ENCODE measurements at regions of chr3 and their contacts with region 1.

Region 1: GRCh38 chr3:32947789-32948238 is 3.6 kb upstream of the CCR4 start:
- DNase-seq: peak; percentile 61 to 88 (median 75)
- ATAC-seq: peak; percentile 71 to 90 (median 88)
- H3K4me3 ChIP-seq: no peak overlapping the region
- H3K27ac ChIP-seq: no peak overlapping the region
- H3K4me1 ChIP-seq: peaks cover 0 to 3% (median 0%) of the 10 kb centered on the region in 12 donors
- H3K27me3 ChIP-seq: no peaks in the 10 kb centered on the region
- CTCF ChIP-seq: peak; percentile 54 to 78 (median 66)
- POLR2A ChIP-seq: no peak

Region 2: GRCh38 chr3:32882603-32883025 is 65.2 kb before region 1 on chr3:
- intact Hi-C with region 1: no loop called
- DNase-seq: no peak
- ATAC-seq: no peak
- H3K4me3 ChIP-seq: no peak overlapping the region
- H3K27ac ChIP-seq: no peak overlapping the region
- H3K4me1 ChIP-seq: no peaks in the 10 kb centered on the region
- H3K27me3 ChIP-seq: no peaks in the 10 kb centered on the region
- CTCF ChIP-seq: no peak
- POLR2A ChIP-seq: no peak

Region 3: DNA sequence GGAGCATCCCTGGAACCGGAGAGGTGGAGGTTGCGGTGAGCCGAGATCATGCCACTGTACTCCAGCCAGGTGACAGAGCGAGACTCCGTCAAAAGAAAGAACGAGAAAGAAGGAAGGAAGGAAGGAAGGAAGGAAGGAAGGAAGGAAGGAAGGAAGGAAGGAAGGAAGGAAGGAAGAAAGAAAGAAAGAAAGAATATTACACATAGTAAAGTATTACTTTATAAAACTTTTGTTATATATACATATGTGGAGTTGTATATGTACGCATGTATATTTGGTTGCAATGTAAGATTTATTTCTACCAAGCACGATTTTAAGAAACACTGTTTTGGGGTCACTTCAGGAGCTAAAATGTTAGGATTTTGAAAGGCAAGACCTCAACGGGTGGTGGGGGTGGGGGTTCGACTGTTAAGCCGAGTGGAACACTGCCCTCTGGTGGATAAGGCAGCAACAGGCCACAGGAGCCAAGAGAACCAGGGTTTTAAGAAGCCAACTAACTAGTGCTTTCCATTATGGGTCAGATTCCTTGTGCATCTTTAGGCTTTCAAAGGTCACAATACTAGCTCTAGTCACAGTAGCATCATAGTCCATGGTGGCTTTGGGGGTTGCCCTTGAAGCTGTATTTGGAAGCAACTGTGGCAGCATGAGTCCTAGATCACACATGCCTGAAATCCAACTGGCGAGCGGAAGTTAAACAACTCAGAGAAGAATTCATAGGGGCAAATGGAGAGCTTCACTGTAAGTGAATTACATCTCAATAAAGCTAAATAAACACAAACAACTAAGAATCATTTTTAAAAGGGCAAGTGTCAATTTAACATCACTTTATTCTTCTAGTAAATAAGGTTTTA is 126.6 kb after region 1 on chr3:
- intact Hi-C with region 1: loop called in 9 of 10 experiments (anchors 1 to 10 kb)
- DNase-seq: peak in 4 of 5 donors; percentile 37 to 51 (median 44)
- ATAC-seq: peak in 3 of 4 donors; percentile 62 to 75 (median 68)
- H3K4me3 ChIP-seq: no peak overlapping the region
- H3K27ac ChIP-seq: no peak overlapping the region
- H3K4me1 ChIP-seq: peaks cover 0 to 16% (median 0%) of the 10 kb centered on the region in 12 donors
- H3K27me3 ChIP-seq: no peaks in the 10 kb centered on the region
- CTCF ChIP-seq: peak; percentile 63 to 86 (median 76)
- POLR2A ChIP-seq: no peak

Region 4: GRCh38 chr3:33360136-33360825 is 412.5 kb after region 1 on chr3:
- intact Hi-C with region 1: loop called in 1 of 10 experiments (anchors 5 kb)
- DNase-seq: no peak
- ATAC-seq: no peak
- H3K4me3 ChIP-seq: no peak overlapping the region
- H3K27ac ChIP-seq: no peak overlapping the region
- H3K4me1 ChIP-seq: peaks cover 0 to 11% (median 1%) of the 10 kb centered on the region in 12 donors
- H3K27me3 ChIP-seq: no peaks in the 10 kb centered on the region
- CTCF ChIP-seq: no peak
- POLR2A ChIP-seq: no peak

Region 5: DNA sequence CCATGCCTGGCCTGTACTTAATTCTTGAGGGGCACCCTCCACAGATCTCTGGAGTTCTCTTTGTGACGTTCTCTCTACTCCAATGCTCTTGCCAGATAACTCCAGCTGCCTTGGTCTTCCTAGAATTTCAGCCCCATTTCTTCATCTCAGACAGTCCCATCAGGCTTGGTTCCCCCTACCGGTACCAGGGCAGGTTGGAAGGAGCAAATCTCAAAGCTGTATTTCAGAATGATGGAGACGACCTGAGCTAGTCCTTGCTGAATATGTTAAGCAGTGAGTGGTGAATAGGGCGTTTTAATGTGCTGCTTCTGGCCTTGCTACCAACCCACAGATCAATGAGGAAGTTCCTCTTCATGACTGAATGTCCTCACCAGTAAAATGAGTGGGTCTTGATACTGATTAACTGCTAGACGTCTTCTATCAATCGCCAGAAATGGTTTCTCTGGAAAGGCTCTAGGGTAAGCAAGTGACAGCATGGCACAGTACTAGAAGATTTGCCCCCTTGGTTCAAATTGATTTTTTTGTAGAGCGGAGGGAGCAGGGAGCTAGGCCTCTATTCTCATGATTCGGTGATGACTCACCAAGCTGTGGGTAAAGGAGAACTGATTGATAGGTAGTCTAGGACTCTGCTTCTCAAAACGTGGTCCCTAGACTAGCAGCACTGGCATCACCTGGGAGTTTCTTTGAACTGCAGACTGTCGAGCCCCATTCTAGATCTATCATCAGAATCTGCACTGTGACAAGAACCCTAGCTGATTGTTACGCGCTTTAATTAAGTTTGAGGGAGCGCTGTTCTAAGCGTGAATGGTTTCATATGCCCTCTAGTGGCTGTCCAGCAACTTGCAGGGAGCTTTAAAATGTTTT is 424.6 kb after region 1 on chr3:
- intact Hi-C with region 1: loop called in 8 of 10 experiments (anchors 2 to 10 kb)
- DNase-seq: no peak
- ATAC-seq: peak in 3 of 4 donors; percentile 59 to 74 (median 66)
- H3K4me3 ChIP-seq: no peak overlapping the region
- H3K27ac ChIP-seq: no peak overlapping the region
- H3K4me1 ChIP-seq: peaks cover 0 to 9% (median 0%) of the 10 kb centered on the region in 12 donors
- H3K27me3 ChIP-seq: no peaks in the 10 kb centered on the region
- CTCF ChIP-seq: peak; percentile 84 to 93 (median 90)
- POLR2A ChIP-seq: no peak